ENCODE measurements at regions of chr6 and their contacts with region 1.

Region 1: DNA sequence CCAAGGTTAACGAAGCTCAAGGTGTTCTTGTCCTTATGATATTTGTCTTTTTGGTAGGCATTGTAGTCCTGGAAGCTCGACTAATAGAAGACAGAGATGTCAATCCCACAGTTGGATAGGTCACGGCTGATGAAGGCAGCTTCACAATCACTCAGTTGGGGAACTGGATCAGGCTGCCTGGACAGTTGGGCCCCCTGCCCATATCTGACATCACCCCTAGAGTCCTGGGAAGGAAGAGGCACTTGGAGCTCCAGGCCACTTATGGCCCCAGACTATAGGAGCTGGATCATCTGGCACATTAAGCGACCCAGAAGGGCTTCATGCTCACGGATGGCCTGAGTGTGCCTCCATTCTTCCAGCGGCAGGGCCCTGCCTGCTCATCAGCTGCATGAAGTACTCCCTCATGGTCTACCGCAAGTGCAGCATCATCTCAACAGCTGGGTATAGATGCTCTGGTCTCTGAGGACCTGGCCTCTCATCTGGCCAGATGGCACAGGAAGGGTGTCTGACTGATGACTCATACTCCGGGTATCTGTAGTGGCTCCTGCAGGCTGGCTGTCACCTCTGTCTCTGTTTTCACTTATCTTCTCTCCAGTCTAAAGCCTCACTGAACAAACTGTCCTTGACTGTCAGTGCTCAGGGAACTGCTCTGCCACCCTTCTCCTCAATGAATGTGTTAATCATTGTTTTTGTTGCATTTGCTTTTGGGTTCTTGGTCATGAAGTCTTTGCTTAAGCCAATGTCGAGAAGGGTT is 29.2 kb upstream of the SSR1 start:
- DNase-seq: no peak
- ATAC-seq: no peak
- H3K4me3 Mint-ChIP-seq: no peak overlapping the region
- H3K27ac Mint-ChIP-seq: no peak overlapping the region
- H3K4me1 Mint-ChIP-seq: no peaks in the 10 kb centered on the region
- H3K27me3 Mint-ChIP-seq: peaks cover 21% of the 10 kb centered on the region
- CTCF ChIP-seq: no peak

Region 2: GRCh38 chr6:6724539-6725467 is 617.4 kb before region 1 on chr6:
- CTCF ChIA-PET with region 1: no interaction called
- POLR2A ChIA-PET with region 1: no interaction called
- intact Hi-C with region 1: loop called (anchors 5 kb)
- DNase-seq: peak; percentile 40
- ATAC-seq: peak; percentile 84
- H3K4me3 Mint-ChIP-seq: peak overlapping the region; percentile 65
- H3K27ac Mint-ChIP-seq: no peak overlapping the region
- H3K4me1 Mint-ChIP-seq: peaks cover 8% of the 10 kb centered on the region
- H3K27me3 Mint-ChIP-seq: peaks cover 23% of the 10 kb centered on the region
- CTCF ChIP-seq: no peak

Measured in activated B cell treated with CpG ODN at 0.5 μM for 24 hours (primary cell).